Activated T-helper 2 cell treated with anti-CD3 and anti-CD28 coated beads, Interferon-gamma antibody, Interleukin-2, Interleukin-4, amounts not matched to agents 10 μg/mL and 5 μg/mL and 100 μg/mL, durations not matched to agents 14 hours and 24 hours and 36 hours (primary cell): ENCODE measurements at regions of chr13 and their contacts with region 1.

Region 1: GRCh38 chr13:91722267-91722884 is 324.0 kb downstream of the GPC5 start:
- DNase-seq: no peak
- H3K4me3 Mint-ChIP-seq: no peak overlapping the region
- H3K27ac Mint-ChIP-seq: no peak overlapping the region
- H3K4me1 Mint-ChIP-seq: peaks cover 7% of the 10 kb centered on the region
- H3K27me3 Mint-ChIP-seq: peaks cover 4% of the 10 kb centered on the region

Region 2: GRCh38 chr13:91313103-91313502 is 409.3 kb before region 1 on chr13:
- intact Hi-C with region 1: loop called (anchors 10 kb)
- DNase-seq: no peak
- H3K4me3 Mint-ChIP-seq: no peak overlapping the region
- H3K27ac Mint-ChIP-seq: no peak overlapping the region
- H3K4me1 Mint-ChIP-seq: peaks cover 9% of the 10 kb centered on the region
- H3K27me3 Mint-ChIP-seq: peaks cover 14% of the 10 kb centered on the region

Region 3: GRCh38 chr13:91381371-91381770 is 341.0 kb before region 1 on chr13:
- intact Hi-C with region 1: loop called (anchors 5 kb)
- DNase-seq: no peak
- H3K4me3 Mint-ChIP-seq: no peak overlapping the region
- H3K27ac Mint-ChIP-seq: no peak overlapping the region
- H3K4me1 Mint-ChIP-seq: no peaks in the 10 kb centered on the region
- H3K27me3 Mint-ChIP-seq: peaks cover 22% of the 10 kb centered on the region